Endothelial cell of umbilical vein (primary cell): ENCODE measurements at regions of chr17 and their contacts with region 1.

Region 1: DNA sequence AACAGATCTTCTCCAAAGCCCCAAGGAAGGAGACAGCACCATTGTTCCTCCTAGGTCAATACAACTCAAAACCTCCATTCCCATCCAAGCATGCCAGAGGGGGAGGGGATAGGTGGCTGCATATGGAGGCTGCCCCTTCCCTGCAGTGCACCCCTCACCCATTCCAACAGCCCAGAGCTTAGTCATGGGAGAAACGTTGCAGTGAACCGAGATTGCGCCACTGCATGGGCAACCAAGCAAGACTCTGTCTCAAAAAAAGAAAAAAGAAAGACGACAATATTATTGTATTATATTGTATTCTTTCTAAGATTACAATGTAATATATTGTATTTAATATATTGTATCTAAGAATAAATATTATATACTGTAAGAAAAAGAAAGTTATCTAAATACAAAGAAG is 36.4 kb upstream of the CD300E start:
- DNase-seq: no peak
- H3K4me3 ChIP-seq: no peak overlapping the region
- H3K27ac ChIP-seq: no peak overlapping the region
- H3K4me1 ChIP-seq: no peaks in the 10 kb centered on the region
- H3K27me3 ChIP-seq: no peaks in the 10 kb centered on the region
- CTCF ChIP-seq: no peak
- POLR2A ChIP-seq: no peak

Region 2: GRCh38 chr17:74351552-74352210 is 308.2 kb before region 1 on chr17:
- CTCF ChIA-PET with region 1: no interaction called
- POLR2A ChIA-PET with region 1: no interaction called
- dilution Hi-C with region 1: no loop called
- intact Hi-C with region 1: no loop called
- DNase-seq: no peak
- H3K4me3 ChIP-seq: no peak overlapping the region
- H3K27ac ChIP-seq: no peak overlapping the region
- H3K4me1 ChIP-seq: no peaks in the 10 kb centered on the region
- H3K27me3 ChIP-seq: peaks cover 3 to 19% of the 10 kb centered on the region in 2 experiments
- CTCF ChIP-seq: no peak
- POLR2A ChIP-seq: no peak

Region 3: DNA sequence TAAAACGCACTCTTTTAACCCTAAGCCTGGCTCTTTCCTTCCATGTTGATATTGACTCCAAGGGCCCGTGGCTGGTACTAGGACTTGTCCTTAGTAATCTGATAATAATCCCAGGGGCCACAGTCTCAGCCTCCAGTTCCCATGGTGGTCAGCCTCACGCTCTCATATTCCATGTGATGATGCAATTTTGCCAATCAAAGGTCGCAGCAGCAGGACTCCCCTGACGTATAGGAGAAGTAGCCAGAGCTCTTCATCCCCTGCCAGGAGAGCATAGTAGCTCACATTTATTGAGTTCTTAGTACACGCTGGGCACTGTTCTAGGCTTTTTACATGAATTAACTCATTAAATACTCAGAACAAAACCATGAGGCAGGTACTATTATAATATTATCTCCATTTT is 10.4 kb after region 1 on chr17:
- CTCF ChIA-PET with region 1: interaction called, 13 read pairs
- POLR2A ChIA-PET with region 1: no interaction called
- dilution Hi-C with region 1: no loop called
- intact Hi-C with region 1: no loop called
- DNase-seq: no peak
- H3K4me3 ChIP-seq: no peak overlapping the region
- H3K27ac ChIP-seq: no peak overlapping the region
- H3K4me1 ChIP-seq: no peaks in the 10 kb centered on the region
- H3K27me3 ChIP-seq: no peaks in the 10 kb centered on the region
- CTCF ChIP-seq: no peak
- POLR2A ChIP-seq: no peak

Region 4: DNA sequence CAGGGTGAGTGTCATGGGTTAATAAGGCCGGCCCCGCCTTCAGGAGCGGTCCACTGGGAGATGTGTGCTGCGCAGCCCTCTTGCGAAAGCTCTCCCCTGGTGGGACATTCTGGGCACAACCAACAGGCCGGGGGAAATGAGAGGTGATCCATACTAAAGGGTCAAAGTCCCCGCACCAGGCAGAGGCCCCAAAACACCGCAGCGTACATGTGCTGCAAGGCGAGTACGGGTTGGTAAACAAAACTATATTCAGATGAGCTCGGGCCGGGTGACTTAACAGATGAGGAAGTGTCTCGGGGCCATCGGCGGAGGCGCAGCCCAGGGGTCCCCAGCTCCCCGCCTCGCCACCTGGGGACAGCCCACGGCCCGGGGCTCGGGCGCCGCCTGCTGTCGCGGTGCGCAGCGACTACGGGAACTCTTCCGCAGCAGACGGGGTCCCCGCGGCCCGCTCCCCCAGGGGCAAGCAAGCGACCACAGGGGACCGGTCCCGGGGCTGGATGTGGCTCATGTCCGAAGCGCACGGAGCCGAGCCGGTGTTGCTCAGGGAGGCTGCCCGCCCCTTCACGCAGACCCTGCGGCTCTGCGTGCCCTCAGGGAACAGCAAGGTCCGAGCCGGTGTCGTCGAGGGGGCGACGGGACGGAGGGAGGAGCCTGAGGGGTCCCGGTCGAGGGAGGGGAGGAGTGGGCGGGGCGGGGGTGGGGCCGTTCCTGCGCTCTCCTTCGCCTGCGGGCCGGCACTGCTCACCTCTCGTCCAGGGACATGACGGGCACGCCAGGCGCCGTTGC is 76.8 kb after region 1 on chr17 and contains the start of gene RAB37:
- CTCF ChIA-PET with region 1: interaction called, 131 read pairs
- POLR2A ChIA-PET with region 1: no interaction called
- dilution Hi-C with region 1: no loop called
- intact Hi-C with region 1: loop called (anchors 1 kb)
- DNase-seq: no peak
- H3K4me3 ChIP-seq: no peak within 1 kb of the TSS
- H3K27ac ChIP-seq: no peak within 1 kb of the TSS
- H3K4me1 ChIP-seq: no peaks in the 10 kb centered on the region
- H3K27me3 ChIP-seq: peaks cover 29 to 39% of the 10 kb centered on the region in 2 experiments
- CTCF ChIP-seq: peak in 1 of 2 donors; percentile 41
- POLR2A ChIP-seq: no peak
- total RNA-seq, gene RAB37: 0.21 TPM in 1 of 2 replicates, not detected in the other

Region 5: GRCh38 chr17:74742153-74742515 is 82.2 kb after region 1 on chr17:
- CTCF ChIA-PET with region 1: interaction called, 131 read pairs
- POLR2A ChIA-PET with region 1: no interaction called
- dilution Hi-C with region 1: no loop called
- intact Hi-C with region 1: no loop called
- DNase-seq: peak; percentile 37
- H3K4me3 ChIP-seq: no peak overlapping the region
- H3K27ac ChIP-seq: no peak overlapping the region
- H3K4me1 ChIP-seq: peaks cover 8% of the 10 kb centered on the region
- H3K27me3 ChIP-seq: peaks cover 17 to 26% of the 10 kb centered on the region in 2 experiments
- CTCF ChIP-seq: no peak
- POLR2A ChIP-seq: no peak

Region 6: DNA sequence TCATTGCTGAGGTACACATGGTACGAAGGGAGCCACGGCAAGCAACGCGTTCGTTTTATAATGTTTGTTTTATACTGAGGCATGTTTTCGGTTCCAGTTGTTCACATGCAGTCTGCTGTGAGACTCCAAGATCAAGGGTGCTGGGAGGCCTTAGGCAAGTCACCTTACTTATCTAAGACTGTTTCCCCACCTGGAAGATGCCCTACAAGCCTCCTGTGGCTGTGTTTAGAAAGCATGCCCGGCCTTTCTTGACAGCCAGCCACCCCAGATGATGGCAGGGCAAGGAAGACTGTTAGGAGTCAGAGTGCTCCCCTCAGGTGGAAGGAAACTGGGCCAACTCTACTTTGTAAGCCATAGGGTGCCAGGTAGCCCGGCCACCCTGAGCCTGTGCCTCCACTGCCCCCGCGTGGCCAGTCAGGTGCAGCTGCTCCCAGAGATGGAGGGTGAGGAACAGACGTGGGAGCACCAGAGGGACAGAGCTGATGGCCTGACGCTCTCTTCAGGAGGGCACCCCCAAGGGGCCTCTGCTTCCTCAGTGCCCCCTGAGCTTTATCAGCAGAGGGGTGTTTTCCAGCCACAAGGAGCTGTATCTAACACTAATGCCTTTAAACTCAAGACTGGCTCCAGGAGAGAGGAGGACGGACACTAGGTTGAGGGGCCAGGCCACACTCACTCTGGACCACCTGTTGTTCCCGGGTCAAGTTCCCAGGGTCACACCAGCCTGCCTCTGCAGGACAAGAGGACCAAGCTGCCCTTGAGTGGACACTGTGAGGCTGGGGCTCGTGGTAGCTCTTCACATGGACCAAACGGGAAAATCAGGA is 110.8 kb after region 1 on chr17:
- CTCF ChIA-PET with region 1: interaction called, 32 read pairs
- POLR2A ChIA-PET with region 1: no interaction called
- dilution Hi-C with region 1: no loop called
- intact Hi-C with region 1: loop called (anchors 1 kb)
- DNase-seq: peak; percentile 43
- H3K4me3 ChIP-seq: no peak overlapping the region
- H3K27ac ChIP-seq: no peak overlapping the region
- H3K4me1 ChIP-seq: no peaks in the 10 kb centered on the region
- H3K27me3 ChIP-seq: no peaks in the 10 kb centered on the region
- CTCF ChIP-seq: peak; percentile 66 to 76
- POLR2A ChIP-seq: no peak